A673 (cell line): ENCODE measurements at regions of chr16 and their contacts with region 1.

Region 1: DNA sequence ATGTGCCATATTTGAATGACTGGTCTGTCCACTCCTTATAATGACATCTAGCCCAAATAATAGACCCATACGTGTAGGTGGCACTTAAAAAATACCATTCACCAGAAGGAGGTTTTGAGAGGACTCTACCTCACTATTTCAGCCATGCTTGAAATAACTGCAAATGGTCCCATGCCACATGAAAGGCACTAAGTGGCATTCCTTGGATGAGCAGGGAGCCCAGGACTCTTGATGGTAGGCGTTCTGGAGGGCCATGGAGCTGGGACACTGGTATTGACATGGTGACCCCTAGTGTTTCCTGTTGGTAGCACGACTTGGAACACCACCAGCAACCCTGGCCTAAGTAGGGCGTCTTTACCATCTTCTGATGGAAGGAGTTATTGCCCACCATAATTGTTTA is 148.7 kb upstream of the ZFHX3 start:
- DNase-seq: peak; percentile 84
- H3K4me3 ChIP-seq: no peak overlapping the region
- H3K27ac ChIP-seq: no peak overlapping the region
- H3K4me1 ChIP-seq: no peaks in the 10 kb centered on the region
- H3K27me3 ChIP-seq: no peaks in the 10 kb centered on the region
- CTCF ChIP-seq: peak; percentile 78

Region 2: DNA sequence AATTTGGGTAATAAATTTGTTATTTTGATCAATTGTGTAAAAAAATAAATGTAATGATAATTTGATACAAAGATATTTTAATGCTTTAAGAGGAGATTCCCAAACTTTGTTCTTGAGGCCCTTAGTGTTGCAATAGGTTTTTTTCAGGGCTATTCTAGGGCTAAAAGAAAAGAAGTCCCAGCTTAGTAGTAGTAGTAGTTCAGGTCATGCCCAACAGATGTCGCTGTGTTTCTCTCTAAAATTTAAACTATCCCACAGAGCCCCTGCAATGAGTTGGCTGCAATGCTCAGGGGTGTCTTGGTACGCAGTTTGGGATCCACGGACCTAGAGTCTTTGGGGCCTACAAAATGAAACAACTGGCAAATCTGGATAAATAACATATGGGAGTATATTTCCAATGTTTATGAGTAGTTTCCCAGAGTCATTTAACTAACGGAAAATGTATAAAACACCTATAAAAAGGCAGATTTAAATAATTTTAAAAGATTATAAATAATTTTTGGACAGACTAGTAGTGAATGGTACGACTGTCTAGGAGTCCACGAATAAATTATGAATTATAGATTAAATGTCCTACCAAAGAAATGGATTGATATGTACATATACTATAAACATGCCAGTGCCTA is 796.3 kb before region 1 on chr16:
- CTCF ChIA-PET with region 1: interaction called, 3 read pairs
- POLR2A ChIA-PET with region 1: no interaction called
- intact Hi-C with region 1: loop called (anchors 10 kb)
- DNase-seq: peak; percentile 81
- H3K4me3 ChIP-seq: no peak overlapping the region
- H3K27ac ChIP-seq: no peak overlapping the region
- H3K4me1 ChIP-seq: no peaks in the 10 kb centered on the region
- H3K27me3 ChIP-seq: no peaks in the 10 kb centered on the region
- CTCF ChIP-seq: peak; percentile 82

Region 3: GRCh38 chr16:72501739-72502593 is 694.7 kb before region 1 on chr16:
- CTCF ChIA-PET with region 1: interaction called, 3 read pairs
- POLR2A ChIA-PET with region 1: no interaction called
- intact Hi-C with region 1: loop called (anchors 2 kb)
- DNase-seq: peak; percentile 79
- H3K4me3 ChIP-seq: no peak overlapping the region
- H3K27ac ChIP-seq: no peak overlapping the region
- H3K4me1 ChIP-seq: no peaks in the 10 kb centered on the region
- H3K27me3 ChIP-seq: no peaks in the 10 kb centered on the region
- CTCF ChIP-seq: peak; percentile 89